Left lung (tissue), 14 donors: ENCODE measurements at regions of chr1 and their contacts with region 1.

Region 1: DNA sequence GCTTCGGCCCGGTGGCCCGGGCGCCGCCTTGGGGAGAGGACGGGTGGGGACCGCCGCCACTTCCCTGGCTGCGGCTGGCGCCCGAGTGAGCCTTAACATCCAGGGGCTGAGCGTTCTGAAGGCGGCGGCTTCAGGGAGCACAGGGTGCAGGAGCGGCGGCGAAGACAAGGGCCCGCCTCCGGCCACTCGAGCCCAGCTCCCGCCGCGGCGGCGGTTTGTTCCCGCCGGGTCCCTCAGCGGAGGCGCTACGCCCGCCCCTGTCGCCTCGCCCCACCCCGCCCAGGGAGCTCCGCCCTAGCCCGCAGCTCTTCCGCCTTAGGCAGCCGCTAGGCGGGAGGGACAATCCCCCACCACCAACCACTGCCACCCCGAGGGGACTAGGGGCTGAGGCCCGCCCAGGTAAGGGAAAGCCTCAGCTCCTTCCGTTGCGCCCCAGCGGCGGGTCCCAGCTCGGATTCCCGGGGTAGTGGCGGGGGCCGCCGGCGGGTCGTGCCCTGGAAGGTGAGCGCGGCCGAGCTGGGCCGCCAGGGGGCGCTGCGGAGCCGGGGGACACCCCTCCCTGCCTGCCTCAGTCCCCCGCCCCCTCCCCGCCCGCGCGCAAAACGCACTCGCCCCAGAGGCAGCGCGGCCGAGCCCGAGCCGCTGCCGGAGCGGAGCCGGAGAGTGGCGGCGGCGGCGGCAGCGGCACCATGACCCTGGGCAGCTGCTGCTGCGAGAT is at the start of gene FOXD2:
- DNase-seq: peak; percentile 86 to 96 (median 89)
- ATAC-seq: peak; percentile 94
- H3K4me3 ChIP-seq: peak within 1 kb of the TSS; percentile 71 to 76
- H3K27ac ChIP-seq: peak within 1 kb of the TSS; percentile 78 to 81
- H3K4me1 ChIP-seq: peaks cover 11 to 48% of the 10 kb centered on the region in 2 donors
- H3K27me3 ChIP-seq: peaks cover 56 to 100% of the 10 kb centered on the region in 2 donors
- CTCF ChIP-seq: peak; percentile 99 to 100
- polyA plus RNA-seq, gene FOXD2: 0.29 to 0.46 (median 0.34) TPM

Region 2: DNA sequence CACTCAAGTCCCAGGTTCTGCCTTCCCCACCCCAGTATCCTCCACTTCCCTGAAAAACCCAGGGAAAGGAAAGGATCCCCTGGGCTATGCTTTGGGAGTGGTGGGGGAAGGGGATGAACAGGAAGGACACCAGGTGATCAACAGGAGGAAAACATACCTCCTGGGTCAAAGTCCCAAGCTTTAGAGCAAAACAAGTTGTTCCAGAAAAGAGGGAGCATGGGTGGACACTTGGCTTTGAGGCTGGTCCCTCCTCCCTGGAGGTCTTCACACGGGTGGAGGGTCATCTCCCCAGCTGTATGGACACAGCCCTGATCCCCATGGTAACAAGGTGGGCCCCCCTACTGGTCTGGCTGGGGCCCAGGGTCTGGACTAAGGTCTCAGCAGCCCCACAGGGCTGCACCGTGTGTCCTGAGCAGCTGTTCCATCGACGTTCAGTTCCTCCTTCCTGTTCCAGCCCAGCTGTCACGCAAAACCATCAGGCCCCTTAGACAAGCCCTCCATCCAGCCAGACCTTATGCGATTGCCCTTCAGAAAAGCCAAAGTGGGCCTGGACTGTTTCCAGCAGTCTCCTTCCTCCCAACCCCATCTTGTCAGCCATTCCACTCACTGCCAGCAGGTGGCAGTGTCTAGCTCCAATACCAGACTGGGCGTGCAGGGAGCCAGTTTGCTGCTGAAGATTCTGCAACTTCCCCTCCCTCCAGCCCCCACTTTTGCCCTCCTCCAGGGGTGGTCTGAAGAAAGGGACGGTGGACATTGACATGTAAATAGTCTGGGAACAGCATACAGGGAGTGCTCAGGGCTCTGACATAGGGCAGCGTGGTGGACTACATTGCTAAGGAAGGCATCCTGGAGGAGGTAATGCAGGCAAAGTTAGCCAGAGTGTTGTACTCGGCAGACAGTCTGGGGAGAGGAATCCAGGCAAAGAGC is 244.9 kb before region 1 on chr1:
- intact Hi-C with region 1: loop called in 1 of 2 experiments (anchors 10 kb)
- DNase-seq: peak in 3 of 4 donors; percentile 73 to 90 (median 79)
- ATAC-seq: peak; percentile 54
- H3K4me3 ChIP-seq: no peak overlapping the region
- H3K27ac ChIP-seq: no peak overlapping the region
- H3K4me1 ChIP-seq: peaks cover 0 to 29% of the 10 kb centered on the region in 2 donors
- H3K27me3 ChIP-seq: no peaks in the 10 kb centered on the region
- CTCF ChIP-seq: peak; percentile 92 to 97

Region 3: GRCh38 chr1:47696740-47697441 is 259.3 kb after region 1 on chr1:
- intact Hi-C with region 1: no loop called
- DNase-seq: peak in 1 of 4 donors; percentile 70
- ATAC-seq: peak; percentile 96
- H3K4me3 ChIP-seq: no peak overlapping the region
- H3K27ac ChIP-seq: no peak overlapping the region
- H3K4me1 ChIP-seq: no peaks in the 10 kb centered on the region
- H3K27me3 ChIP-seq: no peaks in the 10 kb centered on the region
- CTCF ChIP-seq: no peak

Region 4: DNA sequence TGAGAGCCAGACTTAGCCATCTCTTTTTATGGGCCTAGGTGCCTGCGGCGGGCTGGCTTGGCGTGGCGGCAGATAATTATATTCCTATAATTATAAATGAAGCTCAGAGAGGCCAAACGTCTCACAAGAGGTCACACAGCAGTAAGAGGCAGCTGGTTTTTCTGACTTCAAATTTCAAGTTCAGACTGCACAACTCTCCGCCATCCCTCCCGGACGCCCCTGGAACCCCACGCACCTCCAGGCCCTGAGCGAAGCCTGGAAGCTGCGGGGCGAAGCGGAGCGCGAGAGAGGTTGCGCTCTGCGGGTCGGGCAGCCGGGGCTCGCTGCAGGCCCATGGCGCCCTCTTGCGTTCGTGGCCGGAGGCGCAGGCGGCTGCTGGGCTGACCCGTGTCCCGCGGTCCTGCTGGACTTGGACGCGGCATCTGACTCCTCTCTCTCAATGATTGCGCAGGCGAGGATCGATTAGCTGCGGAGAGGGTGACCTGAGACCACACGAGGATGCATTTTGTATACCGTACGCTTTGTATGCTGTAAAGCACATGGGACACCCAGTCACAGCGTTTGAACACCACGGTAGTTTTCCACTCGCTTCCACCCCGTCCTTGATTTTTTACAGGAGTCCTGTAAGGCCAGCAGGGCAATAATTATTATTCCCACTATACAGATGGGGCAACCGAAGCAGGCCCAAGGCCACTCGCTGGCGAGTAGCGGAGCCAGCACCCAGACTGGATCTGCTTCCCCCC is 272.9 kb after region 1 on chr1:
- intact Hi-C with region 1: loop called in 1 of 2 experiments (anchors 5 kb)
- DNase-seq: peak; percentile 62 to 93 (median 71)
- ATAC-seq: peak; percentile 96
- H3K4me3 ChIP-seq: peak overlapping the region in 1 of 2 donors; percentile 29
- H3K27ac ChIP-seq: no peak overlapping the region
- H3K4me1 ChIP-seq: peaks cover 0 to 20% of the 10 kb centered on the region in 2 donors
- H3K27me3 ChIP-seq: peaks cover 37 to 100% of the 10 kb centered on the region in 2 donors
- CTCF ChIP-seq: peak; percentile 98 to 99